ENCODE measurements at regions of chr7 and their contacts with region 1.

Region 1: GRCh38 chr7:50679218-50680007 is 103.3 kb downstream of the GRB10 start:
- DNase-seq: no peak
- H3K4me3 ChIP-seq: no peak overlapping the region
- H3K27ac ChIP-seq: no peak overlapping the region
- H3K4me1 ChIP-seq: peaks cover 21% of the 10 kb centered on the region
- H3K27me3 ChIP-seq: no peaks in the 10 kb centered on the region
- CTCF ChIP-seq: peak in 3 of 4 experiments; percentile 47 to 66 (median 51)
- POLR2A ChIP-seq: no peak

Region 2: GRCh38 chr7:50268223-50268622 is 411.2 kb before region 1 on chr7:
- intact Hi-C with region 1: no loop called
- DNase-seq: no peak
- H3K4me3 ChIP-seq: no peak overlapping the region
- H3K27ac ChIP-seq: no peak overlapping the region
- H3K4me1 ChIP-seq: no peaks in the 10 kb centered on the region
- H3K27me3 ChIP-seq: no peaks in the 10 kb centered on the region
- CTCF ChIP-seq: no peak
- POLR2A ChIP-seq: no peak

Region 3: DNA sequence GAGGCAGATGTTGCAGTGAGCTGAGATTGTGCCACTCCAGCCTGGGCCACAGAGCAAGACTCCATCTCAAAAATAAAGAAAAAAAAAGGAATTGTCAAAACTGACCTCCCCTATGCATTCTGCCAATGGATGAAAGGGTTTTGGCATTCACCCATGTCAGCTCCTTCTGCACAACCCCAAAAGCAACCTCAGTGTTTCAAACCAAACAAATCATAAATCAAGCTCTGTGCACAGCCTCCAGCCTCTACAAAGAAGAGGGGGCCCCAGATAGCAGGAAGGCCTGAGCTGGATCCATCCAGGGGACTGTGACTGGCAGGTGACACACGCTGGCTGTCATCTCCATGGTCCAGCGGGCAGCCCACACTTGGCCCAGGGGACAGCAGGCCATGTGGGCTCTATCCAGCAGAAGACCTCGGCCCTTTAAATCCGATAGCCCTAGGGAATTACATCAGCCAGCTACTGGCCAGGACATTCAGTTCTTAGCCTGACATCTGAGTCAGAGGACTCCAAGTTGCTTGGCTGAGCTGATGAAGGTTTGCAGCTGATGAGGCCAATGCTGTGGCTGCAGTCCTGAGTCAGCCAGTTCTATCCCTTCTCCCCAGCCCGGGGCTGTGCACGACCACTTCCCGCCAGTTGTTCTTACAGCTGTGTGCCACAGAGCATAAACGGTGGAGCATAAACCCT is 177.3 kb before region 1 on chr7:
- intact Hi-C with region 1: loop called (anchors 10 kb)
- DNase-seq: no peak
- H3K4me3 ChIP-seq: no peak overlapping the region
- H3K27ac ChIP-seq: peak overlapping the region; percentile 53 to 59
- H3K4me1 ChIP-seq: no peaks in the 10 kb centered on the region
- H3K27me3 ChIP-seq: no peaks in the 10 kb centered on the region
- CTCF ChIP-seq: no peak
- POLR2A ChIP-seq: no peak

Region 4: GRCh38 chr7:50610521-50611277 is 68.7 kb before region 1 on chr7:
- intact Hi-C with region 1: loop called (anchors 10 kb)
- DNase-seq: no peak
- H3K4me3 ChIP-seq: no peak overlapping the region
- H3K27ac ChIP-seq: no peak overlapping the region
- H3K4me1 ChIP-seq: no peaks in the 10 kb centered on the region
- H3K27me3 ChIP-seq: no peaks in the 10 kb centered on the region
- CTCF ChIP-seq: no peak
- POLR2A ChIP-seq: no peak

Region 5: DNA sequence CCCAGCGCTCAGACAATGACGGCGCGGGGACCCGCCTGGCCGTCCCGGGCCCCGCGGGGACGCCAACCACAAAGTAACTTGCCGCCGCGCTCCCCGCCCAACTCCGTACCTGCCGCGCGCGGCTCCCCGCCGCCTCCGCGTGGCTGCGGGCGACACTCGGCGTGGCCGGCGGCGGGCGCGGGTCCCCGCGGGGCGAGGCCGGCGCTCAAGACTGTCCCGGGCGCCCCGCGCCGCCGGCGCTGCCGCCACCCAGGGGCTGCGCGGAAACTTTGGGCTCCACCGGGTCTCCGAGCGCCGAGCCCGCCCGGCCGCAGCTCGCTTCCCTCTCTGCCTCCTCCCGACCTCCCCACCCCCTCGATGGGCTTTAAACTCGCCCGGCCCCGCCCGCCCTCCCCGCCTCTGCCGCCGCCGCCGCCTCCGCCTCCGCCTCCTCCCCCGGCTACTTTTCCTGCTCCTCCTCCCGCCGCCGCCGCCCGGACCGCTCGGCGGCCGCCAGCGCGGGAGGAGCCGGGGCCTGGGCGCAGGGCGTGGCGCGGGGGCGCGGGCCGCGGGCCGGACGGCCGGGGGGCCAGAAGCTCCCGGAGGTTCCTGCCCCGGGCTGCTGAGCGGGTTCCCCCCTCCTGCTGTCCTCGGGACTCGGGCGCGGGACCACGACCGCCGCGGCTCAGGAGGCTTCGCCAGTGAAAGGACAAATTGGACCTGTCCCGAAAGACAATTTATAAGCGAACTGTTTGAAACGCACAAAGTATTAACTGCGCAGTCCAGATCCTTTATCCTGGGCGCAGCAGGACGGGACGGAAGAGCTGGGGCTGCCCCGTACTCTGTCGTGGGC is 113.9 kb after region 1 on chr7:
- intact Hi-C with region 1: loop called (anchors 5 kb)
- DNase-seq: peak; percentile 65
- H3K4me3 ChIP-seq: peak overlapping the region; percentile 60 to 67
- H3K27ac ChIP-seq: peak overlapping the region; percentile 81 to 83
- H3K4me1 ChIP-seq: no peaks in the 10 kb centered on the region
- H3K27me3 ChIP-seq: no peaks in the 10 kb centered on the region
- CTCF ChIP-seq: no peak
- POLR2A ChIP-seq: no peak

Region 6: GRCh38 chr7:50812841-50813475 is 133.5 kb after region 1 on chr7:
- intact Hi-C with region 1: no loop called
- DNase-seq: no peak
- H3K4me3 ChIP-seq: no peak overlapping the region
- H3K27ac ChIP-seq: no peak overlapping the region
- H3K4me1 ChIP-seq: no peaks in the 10 kb centered on the region
- H3K27me3 ChIP-seq: no peaks in the 10 kb centered on the region
- CTCF ChIP-seq: no peak
- POLR2A ChIP-seq: no peak